Ovary (tissue), 10 donors: ENCODE measurements at regions of chr3 and their contacts with region 1.

Region 1: GRCh38 chr3:141370065-141370533 is 1.8 kb downstream of the ZBTB38 start:
- DNase-seq: peak; percentile 51 to 78 (median 59)
- H3K4me3 ChIP-seq: no peak overlapping the region
- H3K27ac ChIP-seq: peak overlapping the region in 1 of 2 donors; percentile 87
- H3K4me1 ChIP-seq: peaks cover 19% of the 10 kb centered on the region
- H3K27me3 ChIP-seq: no peaks in the 10 kb centered on the region
- CTCF ChIP-seq: peak; percentile 20 to 66 (median 60)
- EP300 ChIP-seq: no peak
- POLR2A ChIP-seq: no peak

Region 2: DNA sequence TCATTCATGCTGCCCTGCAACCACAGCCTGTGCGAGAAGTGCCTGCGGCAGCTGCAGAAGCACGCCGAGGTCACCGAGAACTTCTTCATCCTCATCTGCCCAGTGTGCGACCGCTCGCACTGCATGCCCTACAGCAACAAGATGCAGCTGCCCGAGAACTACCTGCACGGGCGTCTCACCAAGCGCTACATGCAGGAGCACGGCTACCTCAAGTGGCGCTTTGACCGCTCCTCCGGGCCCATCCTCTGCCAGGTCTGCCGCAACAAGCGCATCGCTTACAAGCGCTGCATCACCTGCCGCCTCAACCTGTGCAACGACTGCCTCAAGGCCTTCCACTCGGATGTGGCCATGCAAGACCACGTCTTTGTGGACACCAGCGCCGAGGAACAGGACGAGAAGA is 687.5 kb before region 1 on chr3:
- intact Hi-C with region 1: no loop called
- DNase-seq: no peak
- H3K4me3 ChIP-seq: no peak overlapping the region
- H3K27ac ChIP-seq: no peak overlapping the region
- H3K4me1 ChIP-seq: no peaks in the 10 kb centered on the region
- H3K27me3 ChIP-seq: no peaks in the 10 kb centered on the region
- CTCF ChIP-seq: no peak
- EP300 ChIP-seq: no peak
- POLR2A ChIP-seq: no peak

Region 3: DNA sequence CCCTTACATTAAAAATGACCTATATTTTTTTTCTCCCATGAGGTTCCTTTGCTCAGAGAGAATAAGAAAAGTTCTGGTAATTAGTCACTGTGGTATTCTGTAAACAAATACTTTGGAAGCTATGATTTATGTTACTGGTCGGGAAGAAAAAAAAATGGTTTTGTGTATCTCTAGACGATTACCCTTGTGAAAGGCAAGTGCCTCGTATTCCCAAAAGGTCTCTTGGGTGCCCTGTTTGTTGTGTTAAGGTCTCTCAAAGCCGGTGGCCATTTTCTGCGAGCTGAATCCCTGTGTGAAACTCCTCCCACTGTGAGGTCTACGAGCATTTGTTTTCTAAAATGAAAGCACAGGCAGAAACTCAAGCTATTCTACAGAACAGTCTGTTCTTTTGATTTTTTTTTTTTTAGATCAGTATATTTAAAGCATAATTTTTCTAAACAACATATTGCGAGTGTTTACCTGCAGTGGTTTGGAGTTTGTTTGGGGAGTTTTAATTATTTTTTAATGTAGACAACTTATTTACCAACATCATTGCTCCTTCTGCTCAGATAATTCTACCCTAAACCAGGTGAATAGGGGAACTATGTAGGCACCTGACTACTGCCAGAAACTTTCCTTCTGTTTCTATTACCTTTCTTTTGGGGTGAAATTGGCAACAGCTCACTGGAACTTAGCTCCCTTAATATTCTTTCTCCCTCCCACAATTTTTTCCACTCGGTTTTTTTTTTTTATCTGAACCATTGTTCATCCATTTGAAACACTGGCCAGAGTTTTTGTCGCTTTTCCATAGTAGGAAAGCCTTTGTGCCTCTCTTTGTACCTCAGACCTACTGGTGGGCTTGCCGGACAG is 42.2 kb after region 1 on chr3:
- intact Hi-C with region 1: loop called in 2 of 4 experiments (anchors 5 kb)
- DNase-seq: peak; percentile 52 to 72 (median 62)
- H3K4me3 ChIP-seq: peak overlapping the region; percentile 33
- H3K27ac ChIP-seq: peak overlapping the region; percentile 65 to 90
- H3K4me1 ChIP-seq: peaks cover 28% of the 10 kb centered on the region
- H3K27me3 ChIP-seq: no peaks in the 10 kb centered on the region
- CTCF ChIP-seq: no peak
- EP300 ChIP-seq: no peak
- POLR2A ChIP-seq: no peak

Region 4: GRCh38 chr3:141441381-141442364 is 71.6 kb after region 1 on chr3:
- intact Hi-C with region 1: loop called in 2 of 4 experiments (anchors 5 kb)
- DNase-seq: peak in 4 of 5 donors; percentile 53 to 75 (median 64)
- H3K4me3 ChIP-seq: no peak overlapping the region
- H3K27ac ChIP-seq: peak overlapping the region in 1 of 2 donors; percentile 40
- H3K4me1 ChIP-seq: peaks cover 10% of the 10 kb centered on the region
- H3K27me3 ChIP-seq: no peaks in the 10 kb centered on the region
- CTCF ChIP-seq: peak in 2 of 3 donors; percentile 35 to 44
- EP300 ChIP-seq: no peak
- POLR2A ChIP-seq: no peak